PC-9 (cell line): ENCODE measurements at regions of chr13 and their contacts with region 1.

Region 1: GRCh38 chr13:102141625-102142472 is 260.0 kb downstream of the FGF14 start:
- DNase-seq: no peak
- H3K4me3 ChIP-seq: no peak overlapping the region
- H3K27ac ChIP-seq: no peak overlapping the region
- H3K4me1 ChIP-seq: no peaks in the 10 kb centered on the region
- H3K27me3 ChIP-seq: no peaks in the 10 kb centered on the region
- CTCF ChIP-seq: peak; percentile 94

Region 2: DNA sequence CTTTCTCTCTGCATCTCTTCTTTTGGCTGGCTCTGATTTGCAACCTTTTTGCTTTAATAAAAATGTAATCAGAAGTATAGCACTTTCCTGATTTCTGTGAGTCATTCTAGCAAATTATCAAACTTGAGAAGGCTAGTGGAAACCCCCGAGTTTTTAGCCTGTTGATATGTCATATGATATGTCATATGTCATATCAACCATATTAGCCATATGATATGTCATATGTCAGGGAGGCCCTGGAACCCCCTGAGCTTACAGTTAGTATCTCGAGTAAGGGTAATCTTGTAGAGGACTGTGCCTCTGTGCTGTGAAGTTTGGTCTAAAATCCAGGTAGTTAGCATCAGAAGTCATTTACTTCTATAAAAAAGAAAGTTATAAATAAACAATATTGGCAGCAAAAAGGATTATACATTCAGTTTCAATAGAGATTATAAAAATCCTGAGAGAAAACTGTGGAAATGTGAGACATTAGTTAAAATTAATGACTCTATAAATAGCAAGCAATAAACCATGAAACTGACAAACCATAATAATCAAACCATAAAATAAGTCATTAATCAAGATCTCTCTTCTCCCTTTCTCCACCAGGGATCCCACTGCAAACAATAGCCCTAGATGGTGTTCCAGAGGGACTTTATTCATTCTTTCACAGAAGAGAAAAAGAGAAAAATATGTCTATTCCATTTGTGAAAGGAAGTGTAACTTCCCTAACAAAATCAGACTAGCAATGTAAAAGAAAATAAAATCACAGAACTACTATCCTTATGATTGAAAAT is 892.9 kb before region 1 on chr13:
- CTCF ChIA-PET with region 1: no interaction called
- POLR2A ChIA-PET with region 1: no interaction called
- intact Hi-C with region 1: no loop called
- DNase-seq: no peak
- H3K4me3 ChIP-seq: no peak overlapping the region
- H3K27ac ChIP-seq: no peak overlapping the region
- H3K4me1 ChIP-seq: no peaks in the 10 kb centered on the region
- H3K27me3 ChIP-seq: no peaks in the 10 kb centered on the region
- CTCF ChIP-seq: no peak

Region 3: DNA sequence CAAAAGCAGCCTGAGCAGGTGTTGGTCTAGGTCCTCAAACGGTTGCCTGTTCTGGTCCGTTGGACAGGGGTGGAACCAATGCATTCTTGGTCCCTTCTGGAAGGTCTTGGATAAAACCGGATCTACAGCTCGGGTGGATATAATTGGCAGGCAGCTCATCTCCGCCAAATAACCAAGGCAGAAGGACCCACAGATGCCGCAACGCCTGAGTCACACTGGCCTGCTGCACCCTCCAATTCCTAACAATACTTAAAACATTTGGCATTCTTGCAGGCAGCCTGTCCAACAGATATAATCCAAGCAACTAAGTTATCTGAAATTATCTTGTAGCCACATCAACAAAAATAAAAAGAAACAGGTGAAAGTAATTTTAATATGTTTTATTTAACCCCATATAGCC is 319.0 kb after region 1 on chr13:
- CTCF ChIA-PET with region 1: no interaction called
- POLR2A ChIA-PET with region 1: no interaction called
- intact Hi-C with region 1: loop called (anchors 5 kb)
- DNase-seq: no peak
- H3K4me3 ChIP-seq: no peak overlapping the region
- H3K27ac ChIP-seq: no peak overlapping the region
- H3K4me1 ChIP-seq: no peaks in the 10 kb centered on the region
- H3K27me3 ChIP-seq: peaks cover 19% of the 10 kb centered on the region
- CTCF ChIP-seq: no peak

Region 4: GRCh38 chr13:102555917-102556553 is 414.2 kb after region 1 on chr13:
- CTCF ChIA-PET with region 1: no interaction called
- POLR2A ChIA-PET with region 1: no interaction called
- intact Hi-C with region 1: loop called (anchors 1 kb)
- DNase-seq: peak in 1 of 2 experiments; percentile 6
- H3K4me3 ChIP-seq: no peak overlapping the region
- H3K27ac ChIP-seq: no peak overlapping the region
- H3K4me1 ChIP-seq: no peaks in the 10 kb centered on the region
- H3K27me3 ChIP-seq: peaks cover 4% of the 10 kb centered on the region; the same call in 1 of the 2 replicates
- CTCF ChIP-seq: peak; percentile 73